ENCODE measurements at regions of chr5 and their contacts with region 1.

Region 1: DNA sequence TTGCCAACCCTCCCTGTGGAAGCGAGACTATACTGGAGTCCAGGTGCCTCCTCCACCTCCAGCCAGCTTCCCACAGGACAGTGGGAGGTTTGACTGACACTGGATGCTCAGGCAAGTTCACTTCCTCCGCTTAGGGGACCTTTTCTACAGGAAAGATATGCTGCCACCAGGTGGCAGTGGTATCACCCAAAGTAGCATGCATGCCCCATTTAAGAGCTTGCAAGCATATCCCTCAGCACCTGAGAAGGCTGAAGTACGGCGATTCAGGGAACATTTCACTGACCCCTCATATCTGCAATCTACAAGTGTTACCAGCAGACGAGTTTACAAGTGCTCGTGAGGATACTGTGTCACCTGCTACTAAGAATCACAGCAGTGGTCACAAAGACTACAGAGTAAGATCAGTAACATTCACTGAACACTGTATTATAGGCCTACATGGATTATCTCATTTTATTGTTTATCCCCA is 75.5 kb downstream of the KLHL3 start:
- DNase-seq: peak; percentile 50
- H3K4me3 Mint-ChIP-seq: no peak overlapping the region
- H3K27ac Mint-ChIP-seq: no peak overlapping the region
- H3K4me1 Mint-ChIP-seq: peaks cover 3% of the 10 kb centered on the region
- H3K27me3 Mint-ChIP-seq: no peaks in the 10 kb centered on the region

Region 2: GRCh38 chr5:137695651-137696428 is 35.5 kb after region 1 on chr5:
- intact Hi-C with region 1: loop called (anchors 1 kb)
- DNase-seq: peak; percentile 6
- H3K4me3 Mint-ChIP-seq: peak overlapping the region; percentile 60
- H3K27ac Mint-ChIP-seq: peak overlapping the region; percentile 83
- H3K4me1 Mint-ChIP-seq: peaks cover 29% of the 10 kb centered on the region
- H3K27me3 Mint-ChIP-seq: no peaks in the 10 kb centered on the region

Region 3: DNA sequence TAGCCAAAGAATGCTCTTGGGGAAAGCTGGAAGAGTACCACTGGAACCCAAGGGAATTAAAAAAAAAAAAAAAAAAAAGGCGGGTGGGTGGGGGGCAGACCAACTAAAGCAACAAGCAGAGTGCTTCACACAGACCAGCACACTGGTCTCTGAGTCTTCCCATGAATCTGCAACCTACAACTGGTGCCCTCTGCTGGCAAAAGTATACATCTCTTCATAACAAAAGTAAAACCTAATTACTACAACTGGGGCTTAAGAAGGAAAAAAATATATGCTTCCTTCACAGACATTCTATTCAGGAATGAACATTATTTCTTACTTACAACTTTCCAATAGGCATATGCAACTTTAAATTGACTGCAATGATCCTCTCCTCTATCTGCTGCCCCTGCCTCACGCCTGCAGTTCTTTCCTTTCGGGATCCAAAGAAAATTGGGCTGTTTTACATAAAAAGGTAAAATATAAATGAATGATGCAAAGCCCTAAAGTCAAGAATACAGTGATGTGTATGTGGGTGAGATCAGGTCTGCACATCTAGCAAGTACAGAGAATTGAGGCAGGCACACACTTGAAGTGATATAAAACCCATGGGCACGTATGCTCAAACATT is 82.8 kb after region 1 on chr5:
- intact Hi-C with region 1: loop called (anchors 1 kb)
- DNase-seq: peak; percentile 54
- H3K4me3 Mint-ChIP-seq: no peak overlapping the region
- H3K27ac Mint-ChIP-seq: no peak overlapping the region
- H3K4me1 Mint-ChIP-seq: no peaks in the 10 kb centered on the region
- H3K27me3 Mint-ChIP-seq: peaks cover 2% of the 10 kb centered on the region

Measured in activated T-helper 1 cell treated with anti-CD3 and anti-CD28 coated beads, Interleukin-12 subunit alpha, Interleukin-12 subunit beta, Interleukin-2, Interleukin-4 antibody, amounts not matched to agents 30 ng/mL and 10 ng/mL and 1 ng/mL, durations not matched to agents 14 hours and 24 hours and 36 hours (primary cell).